ENCODE measurements at regions of chr2 and their contacts with region 1.

Region 1: DNA sequence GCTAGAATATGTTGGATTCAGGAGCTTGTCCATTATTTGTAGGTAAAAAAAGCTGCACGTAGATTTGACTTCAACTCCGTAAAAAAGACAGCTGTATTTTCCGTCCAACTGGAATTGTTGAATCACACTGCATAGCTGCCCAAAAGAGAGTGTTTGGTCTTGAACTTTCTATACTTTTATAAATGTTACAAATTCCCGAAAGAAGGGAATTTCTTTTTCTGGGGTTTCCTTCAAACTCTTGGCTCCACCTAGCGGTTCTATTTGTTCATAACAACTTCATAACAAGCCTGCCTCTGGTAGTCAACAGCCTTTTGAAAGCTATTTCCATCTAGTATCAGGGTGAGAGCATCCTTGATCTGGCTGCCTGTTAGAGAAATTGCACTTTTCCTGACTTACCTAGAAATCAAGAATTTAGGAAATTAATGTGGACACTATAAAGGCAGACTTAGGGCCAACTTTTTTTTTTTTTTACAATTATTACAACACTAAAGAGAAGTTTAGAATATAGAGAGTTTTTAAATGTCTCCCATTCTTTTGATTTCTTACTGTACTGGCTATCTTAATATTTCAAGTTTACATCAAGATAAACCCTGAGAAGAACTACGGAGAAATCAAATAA is 48.1 kb downstream of the TMEM185B start:
- DNase-seq: no peak

Region 2: DNA sequence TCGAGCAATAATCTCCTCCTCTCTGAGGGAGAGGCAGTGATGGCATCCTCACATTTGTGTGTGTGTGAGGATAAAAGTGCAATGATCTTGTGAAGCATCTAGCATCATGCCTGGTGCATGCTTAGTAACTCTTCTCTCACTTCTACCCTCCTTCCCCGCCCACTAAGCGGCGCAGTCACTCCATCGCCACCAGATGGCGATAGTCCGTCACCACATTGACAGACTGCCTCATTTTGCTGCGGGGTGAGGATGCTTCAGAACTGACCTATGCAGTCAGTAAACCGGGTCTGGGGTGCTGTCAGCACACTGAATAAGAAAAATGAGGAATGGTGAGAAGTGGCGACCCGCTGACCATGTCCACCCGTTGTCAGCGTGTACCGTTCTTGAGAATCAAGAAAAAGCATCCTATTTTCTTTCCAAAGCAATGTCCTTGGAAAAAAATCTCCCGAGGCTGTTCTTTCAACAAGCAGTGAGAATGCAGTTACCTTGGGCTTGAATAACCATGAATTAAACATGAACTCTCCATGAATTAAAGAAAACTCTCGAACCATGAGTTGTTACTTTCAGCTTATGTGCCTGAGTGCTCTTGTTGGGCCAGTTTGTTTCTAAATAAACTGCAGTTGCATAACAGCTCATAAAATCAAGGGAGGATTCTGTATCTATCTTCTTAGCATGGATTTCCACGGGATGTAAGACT is 533.4 kb before region 1 on chr2:
- intact Hi-C with region 1: loop called (anchors 2 kb)
- DNase-seq: peak; percentile 63 to 97 (median 84)

Region 3: DNA sequence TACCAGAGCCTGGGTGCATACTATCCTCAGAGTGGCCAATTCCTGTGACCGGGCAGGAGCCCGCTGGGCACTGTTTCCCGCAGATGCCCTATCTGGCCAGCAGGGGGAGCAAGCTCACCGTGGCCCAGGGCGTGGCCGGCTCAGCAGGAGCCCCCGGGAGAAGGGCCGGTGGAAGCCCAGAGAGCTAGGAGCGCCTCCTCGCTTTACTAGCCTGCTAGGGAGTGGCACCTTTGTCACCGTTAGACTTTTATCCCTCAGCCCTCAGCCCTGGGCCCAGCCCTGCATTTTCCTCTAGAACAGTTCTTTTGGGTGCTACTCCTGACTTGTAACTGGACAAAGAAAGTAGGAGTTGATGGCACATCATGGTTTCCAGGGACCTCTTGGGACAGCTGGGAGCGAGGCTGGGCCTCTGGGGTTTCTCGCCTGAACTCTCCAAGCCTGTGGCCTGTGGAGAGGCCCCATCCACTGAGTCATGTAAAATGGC is 472.1 kb before region 1 on chr2:
- intact Hi-C with region 1: loop called (anchors 5 kb)
- DNase-seq: peak; percentile 45 to 96 (median 72)

Region 4: DNA sequence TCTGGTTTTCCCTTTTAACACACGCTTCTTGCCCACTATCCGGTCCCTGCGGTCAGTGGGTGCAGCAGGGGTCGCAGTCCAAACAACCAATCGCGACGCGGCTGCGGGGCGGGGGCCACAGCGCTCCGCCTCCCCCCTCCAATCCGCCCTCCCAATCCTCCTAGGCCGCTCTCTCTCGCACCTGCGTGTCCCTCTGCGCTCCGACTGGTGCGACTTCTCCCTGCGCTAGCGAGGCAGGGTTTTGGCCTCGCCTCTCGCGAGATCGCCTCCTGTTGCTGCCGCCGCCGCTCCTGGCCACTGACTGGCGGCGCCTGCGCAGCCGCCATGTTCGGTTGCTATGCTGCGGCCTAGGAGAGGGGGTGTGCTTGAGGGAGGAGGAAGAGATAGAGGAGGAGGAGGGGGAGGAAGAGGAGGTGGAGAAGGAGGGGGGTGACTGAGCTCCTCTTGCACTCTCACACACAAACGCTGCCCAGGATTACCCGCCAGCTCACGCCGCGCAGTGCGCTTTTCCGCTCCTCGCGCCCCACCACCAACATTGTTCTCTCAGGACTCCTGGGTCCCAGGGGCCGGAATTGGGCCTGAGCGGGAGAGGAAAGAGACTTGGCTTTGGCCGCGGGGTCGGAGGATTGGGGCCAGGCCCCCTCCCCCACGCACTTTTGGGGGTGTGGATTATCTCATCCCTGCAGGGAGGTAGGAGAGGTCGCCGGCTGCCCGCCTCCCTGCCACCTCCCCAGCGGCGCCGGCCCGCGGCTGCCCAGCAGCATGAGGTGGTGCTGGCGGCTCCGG is 415.4 kb before region 1 on chr2 and contains the start of gene PTPN4:
- intact Hi-C with region 1: loop called (anchors 5 kb)
- DNase-seq: peak; percentile 78 to 99 (median 92)

Region 5: GRCh38 chr2:120109186-120110061 is 65.6 kb before region 1 on chr2:
- intact Hi-C with region 1: loop called (anchors 1 kb)
- DNase-seq: no peak

Region 6: GRCh38 chr2:120312861-120313694 is 138.0 kb after region 1 on chr2:
- intact Hi-C with region 1: loop called (anchors 5 kb)
- DNase-seq: peak; percentile 71 to 97 (median 86)